CD8-positive, alpha-beta T cell (primary cell): ENCODE measurements at regions of chr12 and their contacts with region 1.

Region 1: GRCh38 chr12:34022079-34022830 is at the start of gene ALG10:
- DNase-seq: peak; percentile 91 to 98 (median 96)
- ATAC-seq: peak; percentile 95
- H3K4me3 ChIP-seq: peak within 1 kb of the TSS; percentile 86 to 94
- H3K4me3 Mint-ChIP-seq: peak within 1 kb of the TSS; percentile 95
- H3K27ac ChIP-seq: peak within 1 kb of the TSS; percentile 88 to 97
- H3K27ac Mint-ChIP-seq: peak within 1 kb of the TSS; percentile 97
- H3K4me1 ChIP-seq: peaks cover 12% of the 10 kb centered on the region
- H3K4me1 Mint-ChIP-seq: peaks cover 16% of the 10 kb centered on the region
- H3K27me3 ChIP-seq: no peaks in the 10 kb centered on the region
- H3K27me3 Mint-ChIP-seq: no peaks in the 10 kb centered on the region
- CTCF ChIP-seq: peak; percentile 72
- total RNA-seq, gene ALG10: 8.6 to 9.0 TPM

Region 2: DNA sequence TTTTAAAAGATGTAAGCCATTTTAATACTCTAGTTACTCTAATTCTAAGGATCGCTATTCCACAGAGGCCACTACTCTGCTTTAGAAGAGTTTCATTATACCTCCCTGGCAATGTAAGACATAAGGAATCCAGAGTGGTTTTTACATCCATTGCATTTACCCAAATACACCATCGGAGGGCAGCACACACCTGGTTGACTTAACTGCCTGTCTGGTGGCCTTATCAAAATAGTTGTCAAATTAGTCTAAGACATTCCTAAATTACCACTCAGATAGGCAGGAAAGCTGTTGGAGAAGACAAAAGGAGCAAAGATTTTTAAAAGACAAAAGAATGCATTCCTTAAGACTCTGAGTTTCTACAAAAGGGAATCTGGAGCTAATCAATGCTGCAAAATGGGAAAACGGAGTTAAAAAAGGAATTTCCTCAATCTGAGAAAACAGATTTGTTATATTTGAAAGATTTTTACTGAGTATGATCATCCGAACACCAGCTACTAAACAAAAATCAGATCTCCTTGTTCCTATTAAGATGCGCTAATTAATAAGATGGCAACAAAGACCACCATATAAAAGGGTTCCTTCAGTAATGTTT is 1656.7 kb before region 1 on chr12:
- CTCF ChIA-PET with region 1: no interaction called
- POLR2A ChIA-PET with region 1: no interaction called
- intact Hi-C with region 1: loop called (anchors 2 kb)
- DNase-seq: peak in 7 of 9 experiments; percentile 4 to 65 (median 27)
- ATAC-seq: peak; percentile 49
- H3K4me3 ChIP-seq: no peak overlapping the region
- H3K4me3 Mint-ChIP-seq: no peak overlapping the region
- H3K27ac ChIP-seq: no peak overlapping the region
- H3K27ac Mint-ChIP-seq: no peak overlapping the region
- H3K4me1 ChIP-seq: no peaks in the 10 kb centered on the region
- H3K4me1 Mint-ChIP-seq: no peaks in the 10 kb centered on the region
- H3K27me3 ChIP-seq: no peaks in the 10 kb centered on the region
- H3K27me3 Mint-ChIP-seq: no peaks in the 10 kb centered on the region
- CTCF ChIP-seq: peak; percentile 56

Region 3: DNA sequence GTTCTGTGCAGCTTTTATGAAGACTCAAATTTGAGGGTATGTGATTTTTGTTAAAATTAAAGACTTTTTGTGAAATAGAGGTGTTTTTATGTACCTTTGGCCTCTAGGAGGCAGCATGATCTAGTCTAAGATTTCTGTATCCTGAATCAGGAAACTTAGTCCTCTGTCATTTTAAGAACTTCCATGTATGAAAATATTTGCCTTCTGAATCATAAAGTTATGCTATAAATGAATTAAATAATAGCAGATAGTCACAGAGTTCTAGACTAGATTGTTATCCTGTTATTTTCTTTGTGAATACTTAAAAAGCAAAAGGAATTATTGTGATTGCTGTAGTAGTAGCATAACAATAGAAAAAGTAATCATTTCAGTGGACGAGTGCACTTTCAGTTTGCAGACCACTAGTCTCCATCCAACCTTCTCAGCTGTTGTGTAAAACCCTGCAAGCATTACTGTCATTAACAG is 1566.6 kb before region 1 on chr12:
- CTCF ChIA-PET with region 1: no interaction called
- POLR2A ChIA-PET with region 1: no interaction called
- intact Hi-C with region 1: loop called (anchors 2 to 5 kb)
- DNase-seq: peak in 3 of 9 experiments; percentile 14 to 69 (median 50)
- ATAC-seq: no peak
- H3K4me3 ChIP-seq: no peak overlapping the region
- H3K4me3 Mint-ChIP-seq: peak overlapping the region; percentile 24
- H3K27ac ChIP-seq: no peak overlapping the region
- H3K27ac Mint-ChIP-seq: no peak overlapping the region
- H3K4me1 ChIP-seq: no peaks in the 10 kb centered on the region
- H3K4me1 Mint-ChIP-seq: peaks cover 2% of the 10 kb centered on the region
- H3K27me3 ChIP-seq: no peaks in the 10 kb centered on the region
- H3K27me3 Mint-ChIP-seq: no peaks in the 10 kb centered on the region
- CTCF ChIP-seq: peak; percentile 66